SK-N-SH (cell line): ENCODE measurements at regions of chr19 and their contacts with region 1.

Region 1: DNA sequence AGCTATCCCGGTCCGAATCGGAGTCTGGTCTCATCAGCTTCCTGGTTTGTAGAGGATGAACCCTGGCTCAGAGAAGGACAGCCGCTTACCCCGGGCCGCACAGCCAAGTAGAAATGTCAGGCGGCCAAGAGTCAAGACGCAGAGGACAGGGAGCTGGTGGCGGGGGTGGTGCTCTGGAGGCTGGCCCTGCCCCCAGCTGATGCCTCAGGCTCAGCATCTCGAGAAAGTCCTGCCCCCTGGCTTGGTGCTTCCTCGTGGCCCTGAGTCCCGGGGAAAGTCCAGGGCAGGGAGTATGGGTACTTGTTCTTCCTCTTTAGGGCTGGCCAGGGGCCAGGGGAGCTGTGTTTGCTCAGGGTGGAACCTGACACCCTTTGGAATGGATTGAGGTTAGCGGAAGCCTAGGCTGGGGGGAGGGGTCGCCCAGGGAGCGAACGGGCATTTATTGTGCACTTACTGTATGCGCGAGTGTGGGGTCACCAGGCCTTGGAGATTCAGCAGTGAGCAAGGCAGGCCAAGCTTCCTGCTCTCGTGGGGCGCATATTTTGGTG is 2.2 kb downstream of the TJP3 start:
- DNase-seq: peak; percentile 20
- H3K4me3 ChIP-seq: no peak overlapping the region
- H3K27ac ChIP-seq: no peak overlapping the region
- H3K4me1 ChIP-seq: no peaks in the 10 kb centered on the region; a peak in 1 of 4 replicates
- H3K27me3 ChIP-seq: peaks cover 27% of the 10 kb centered on the region
- CTCF ChIP-seq: no peak
- EP300 ChIP-seq: no peak
- RAD21 ChIP-seq: no peak

Region 2: GRCh38 chr19:3692141-3693024 is 18.0 kb before region 1 on chr19:
- CTCF ChIA-PET with region 1: interaction called, 23 read pairs
- POLR2A ChIA-PET with region 1: no interaction called
- DNase-seq: peak; percentile 82
- H3K4me3 ChIP-seq: no peak overlapping the region
- H3K27ac ChIP-seq: no peak overlapping the region
- H3K4me1 ChIP-seq: no peaks in the 10 kb centered on the region
- H3K27me3 ChIP-seq: no peaks in the 10 kb centered on the region
- CTCF ChIP-seq: peak; percentile 57
- EP300 ChIP-seq: no peak
- RAD21 ChIP-seq: no peak; the same call in 1 of the 2 replicates

Region 3: DNA sequence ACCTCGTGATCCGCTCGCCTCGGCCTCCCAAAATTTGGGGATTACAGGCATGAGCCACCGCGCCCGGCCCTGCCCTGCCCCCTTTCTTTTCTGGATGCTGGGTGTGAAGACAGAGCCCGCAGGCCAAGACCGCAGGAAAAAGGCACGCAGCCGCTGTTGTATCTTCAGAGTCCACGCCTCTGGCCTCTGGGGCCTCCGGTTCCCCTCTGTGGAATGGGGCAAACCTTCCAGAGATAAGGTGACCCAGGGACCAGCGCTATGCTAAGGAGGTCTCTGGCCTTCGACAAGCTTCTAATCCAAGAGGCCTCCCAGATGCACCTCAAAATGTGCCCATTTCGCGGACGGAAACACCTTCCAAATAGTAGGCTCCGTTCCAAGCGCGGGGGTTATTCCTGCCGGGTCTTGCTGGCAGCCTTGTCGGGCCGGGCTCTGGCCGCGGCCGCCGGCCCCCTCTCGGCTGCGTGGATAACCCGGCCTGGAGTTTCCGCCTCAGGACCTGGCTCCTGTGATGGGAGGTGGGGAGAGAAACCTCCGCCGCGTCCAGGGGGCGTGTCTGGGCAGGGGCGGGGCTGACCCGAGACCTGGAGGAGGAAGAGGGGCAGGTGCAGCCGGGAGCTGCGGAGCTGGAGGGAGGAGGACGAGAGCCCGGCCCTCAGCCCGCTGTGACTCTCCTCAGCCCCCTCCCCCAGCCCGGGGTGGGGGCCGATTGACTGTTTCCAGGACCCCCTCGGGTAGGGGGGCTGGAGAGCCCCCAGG is 11.0 kb after region 1 on chr19:
- CTCF ChIA-PET with region 1: interaction called, 14 read pairs
- POLR2A ChIA-PET with region 1: no interaction called
- DNase-seq: peak; percentile 98
- H3K4me3 ChIP-seq: peak overlapping the region in 1 of 2 experiments; percentile 40; a peak in 2 of 4 replicates
- H3K27ac ChIP-seq: no peak overlapping the region
- H3K4me1 ChIP-seq: peaks cover 0 to 2% of the 10 kb centered on the region in 2 experiments; a peak in 1 of 4 replicates
- H3K27me3 ChIP-seq: peaks cover 13% of the 10 kb centered on the region
- CTCF ChIP-seq: no peak
- EP300 ChIP-seq: peak in 1 of 2 experiments; percentile 41; a peak in 1 of 4 replicates
- RAD21 ChIP-seq: no peak

Region 4: DNA sequence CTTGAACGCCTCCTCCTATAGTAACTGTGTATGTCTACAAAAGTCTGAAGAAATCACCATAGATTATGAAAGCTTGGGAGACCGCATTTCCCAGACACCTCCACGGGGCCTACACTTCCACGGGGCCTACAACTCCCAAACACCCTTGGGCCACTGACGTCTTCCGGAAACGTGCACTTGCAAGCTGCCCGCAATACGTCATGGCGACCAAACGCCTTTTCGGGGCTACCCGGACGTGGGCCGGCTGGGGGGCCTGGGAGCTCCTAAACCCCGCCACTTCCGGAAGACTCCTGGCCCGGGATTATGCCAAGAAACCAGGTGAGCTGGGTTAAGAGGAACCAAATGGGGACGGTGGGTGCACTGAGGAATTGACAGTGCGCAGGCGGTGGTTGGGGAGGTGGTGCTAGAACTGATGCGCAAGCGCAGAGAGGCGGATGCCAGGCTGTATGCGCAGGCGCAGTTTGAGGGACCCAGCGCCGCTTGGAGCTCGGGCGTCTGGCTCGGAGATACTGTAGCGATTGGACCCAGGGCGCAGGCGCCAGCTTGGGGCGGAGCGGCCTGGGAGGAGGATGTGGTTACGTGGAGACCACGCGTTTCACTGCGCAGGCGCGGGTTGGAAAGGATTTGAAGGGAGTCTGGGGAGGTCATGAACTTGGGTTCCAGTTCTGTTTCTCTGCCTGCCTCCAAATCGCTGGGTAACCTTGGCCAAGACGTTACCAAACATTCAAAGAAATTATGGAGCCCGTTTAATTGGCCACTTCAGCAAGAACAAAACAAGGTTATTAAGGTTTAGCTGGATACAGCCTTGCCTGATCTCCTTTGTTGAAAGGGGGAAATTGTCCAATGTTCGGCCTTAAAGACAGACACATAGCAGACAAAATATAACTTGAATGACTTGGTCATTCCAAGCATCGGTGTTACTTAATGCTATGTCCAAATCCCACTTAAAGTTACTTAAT is 52.4 kb after region 1 on chr19 and contains the start of gene MRPL54:
- CTCF ChIA-PET with region 1: no interaction called
- POLR2A ChIA-PET with region 1: no interaction called
- DNase-seq: peak; percentile 99
- H3K4me3 ChIP-seq: peak within 1 kb of the TSS; percentile 73 to 94
- H3K27ac ChIP-seq: peak within 1 kb of the TSS; percentile 95 to 96
- H3K4me1 ChIP-seq: peaks cover 7 to 9% of the 10 kb centered on the region in 2 experiments; a peak in 2 of 4 replicates
- H3K27me3 ChIP-seq: no peaks in the 10 kb centered on the region
- CTCF ChIP-seq: no peak
- EP300 ChIP-seq: no peak
- RAD21 ChIP-seq: no peak
- polyA plus RNA-seq, gene MRPL54: 103 and 125 TPM in 2 replicates